Caco-2 (cell line): ENCODE measurements at regions of chr1 and their contacts with region 1.

Region 1: DNA sequence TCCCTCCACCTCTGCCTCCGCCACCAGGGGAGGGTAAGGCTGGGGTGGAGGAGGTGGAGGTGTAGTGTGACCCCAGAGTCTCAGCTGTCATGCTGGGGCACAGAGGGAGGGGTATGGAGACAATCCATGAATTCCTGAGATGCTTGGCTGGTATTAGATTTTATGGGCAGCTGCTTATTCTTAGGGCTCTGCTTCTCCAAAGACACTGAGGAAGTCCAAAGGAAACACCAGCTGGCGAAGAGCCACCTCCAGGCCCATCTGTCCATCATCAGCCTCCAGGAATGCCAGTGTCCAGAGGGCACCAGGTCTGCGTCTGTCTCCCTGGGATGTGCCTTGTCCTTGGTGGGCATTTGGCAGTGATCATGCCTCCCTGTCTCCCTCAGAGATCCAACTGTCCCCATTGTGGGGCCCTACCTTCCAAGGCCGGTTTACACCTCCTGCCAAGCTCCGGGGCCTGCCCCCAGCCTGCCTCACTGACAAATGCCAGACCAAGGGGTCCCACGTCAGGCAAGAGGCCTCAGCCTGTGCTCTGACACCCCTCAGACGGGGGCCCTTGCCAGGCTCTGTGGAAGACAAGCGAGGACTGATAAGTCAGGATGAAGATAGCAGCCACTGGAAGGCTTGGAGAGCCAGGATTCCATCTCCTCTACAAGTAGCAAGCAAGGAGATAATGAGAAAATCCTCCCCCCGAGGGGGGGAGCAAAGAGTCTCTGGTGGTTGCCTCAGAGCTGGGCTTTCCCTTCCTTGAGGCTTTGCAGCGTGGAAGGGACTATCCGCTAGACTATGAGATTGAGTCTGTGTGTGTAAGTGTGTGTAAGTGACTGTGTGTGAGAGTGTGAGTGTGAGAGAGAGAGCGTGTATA is 1.6 kb downstream of the TNNI1 start:
- DNase-seq: no peak
- H3K4me3 ChIP-seq: no peak overlapping the region
- H3K4me3 Mint-ChIP-seq: no peak overlapping the region
- H3K27ac Mint-ChIP-seq: no peak overlapping the region
- H3K4me1 ChIP-seq: peaks cover 7% of the 10 kb centered on the region
- H3K4me1 Mint-ChIP-seq: no peaks in the 10 kb centered on the region
- H3K27me3 ChIP-seq: no peaks in the 10 kb centered on the region
- H3K27me3 Mint-ChIP-seq: no peaks in the 10 kb centered on the region
- CTCF ChIP-seq: no peak

Region 2: DNA sequence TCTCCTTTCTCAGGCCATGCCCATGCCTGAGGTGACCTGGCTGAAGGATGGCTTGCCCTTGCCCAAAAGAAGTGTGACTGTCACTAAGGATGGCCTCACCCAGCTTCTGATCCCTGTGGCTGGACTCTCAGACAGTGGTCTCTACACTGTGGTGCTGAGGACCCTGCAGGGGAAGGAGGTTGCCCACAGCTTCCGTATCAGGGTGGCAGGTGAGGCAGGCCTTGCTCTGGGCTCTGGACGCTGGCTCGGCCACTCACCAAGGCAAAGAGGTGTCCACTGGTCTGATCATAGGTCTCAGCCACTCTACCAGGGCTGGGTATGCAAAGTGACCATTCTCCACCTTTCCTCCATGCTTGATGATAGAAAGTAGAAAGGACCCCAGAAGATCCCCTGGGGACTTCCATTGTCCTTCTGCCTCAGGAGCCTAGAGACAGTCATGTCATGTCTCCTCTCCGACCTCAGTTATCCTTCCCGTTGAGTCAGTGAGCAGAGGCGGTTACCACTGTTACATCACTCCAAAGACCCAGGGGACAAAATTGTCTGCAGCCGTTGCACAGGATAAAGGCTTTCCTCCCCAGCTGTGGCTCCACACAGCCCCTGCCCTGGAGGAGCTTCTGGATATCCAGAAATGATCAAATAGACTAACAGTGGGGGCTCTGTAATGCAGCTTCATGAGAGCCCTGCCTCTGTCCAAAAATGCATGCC is 195.2 kb before region 1 on chr1:
- CTCF ChIA-PET with region 1: no interaction called
- POLR2A ChIA-PET with region 1: no interaction called
- intact Hi-C with region 1: no loop called
- DNase-seq: no peak
- H3K4me3 ChIP-seq: no peak overlapping the region
- H3K4me3 Mint-ChIP-seq: no peak overlapping the region
- H3K27ac Mint-ChIP-seq: no peak overlapping the region
- H3K4me1 ChIP-seq: peaks cover 4% of the 10 kb centered on the region
- H3K4me1 Mint-ChIP-seq: peaks cover 7% of the 10 kb centered on the region
- H3K27me3 ChIP-seq: no peaks in the 10 kb centered on the region
- H3K27me3 Mint-ChIP-seq: no peaks in the 10 kb centered on the region
- CTCF ChIP-seq: no peak

Region 3: GRCh38 chr1:201399352-201400126 is 20.4 kb before region 1 on chr1:
- CTCF ChIA-PET with region 1: no interaction called
- POLR2A ChIA-PET with region 1: interaction called, 10 read pairs
- intact Hi-C with region 1: no loop called
- DNase-seq: peak; percentile 89 to 90
- H3K4me3 ChIP-seq: peak overlapping the region; percentile 79
- H3K4me3 Mint-ChIP-seq: peak overlapping the region; percentile 73
- H3K27ac Mint-ChIP-seq: peak overlapping the region; percentile 73
- H3K4me1 ChIP-seq: peaks cover 60% of the 10 kb centered on the region
- H3K4me1 Mint-ChIP-seq: peaks cover 32% of the 10 kb centered on the region
- H3K27me3 ChIP-seq: no peaks in the 10 kb centered on the region
- H3K27me3 Mint-ChIP-seq: no peaks in the 10 kb centered on the region
- CTCF ChIP-seq: no peak